ENCODE measurements at regions of chr1 and their contacts with region 1.

Region 1: DNA sequence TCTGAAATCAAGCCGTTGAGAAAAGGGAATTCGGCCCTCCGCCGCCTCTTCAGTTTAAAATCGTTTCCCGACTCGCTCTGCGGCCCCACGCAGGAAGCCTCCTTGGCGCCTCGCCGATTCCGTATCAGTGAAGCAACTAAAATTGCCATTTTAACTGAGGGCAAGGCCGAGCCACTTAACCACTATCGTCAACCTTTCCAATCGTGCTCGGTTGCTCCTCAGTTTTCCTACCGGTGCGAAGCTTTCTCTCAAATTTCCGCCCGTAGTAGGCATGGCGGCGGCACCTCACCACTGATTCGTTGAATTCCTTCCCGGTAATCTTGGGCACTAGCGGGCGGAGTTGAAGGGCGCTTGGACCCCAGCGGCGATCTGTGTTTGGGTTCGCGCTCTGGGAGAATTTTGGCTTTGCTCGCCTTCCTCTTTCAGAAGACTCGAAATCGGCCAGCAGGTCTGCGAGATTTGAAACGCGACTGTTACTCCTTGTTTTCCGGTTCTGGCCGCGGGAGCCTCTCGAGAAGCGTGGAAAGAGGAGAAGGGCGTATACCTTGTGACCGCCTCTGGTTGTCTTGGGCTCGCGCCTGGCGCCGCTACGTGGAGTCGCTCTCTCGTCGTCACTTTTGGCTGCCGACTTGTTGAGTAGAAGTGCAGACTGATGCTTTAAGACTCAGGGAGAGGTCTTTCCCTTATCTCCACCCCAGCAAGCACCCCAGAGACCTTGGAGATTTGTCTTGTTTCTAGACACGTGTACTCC is at the starts of genes CENPL and DARS2:
- DNase-seq: peak; percentile 95
- H3K4me3 Mint-ChIP-seq: peak within 1 kb of the TSS; percentile 98
- H3K27ac Mint-ChIP-seq: peak within 1 kb of the TSS; percentile 99
- H3K4me1 Mint-ChIP-seq: peaks cover 45% of the 10 kb centered on the region
- H3K27me3 Mint-ChIP-seq: no peaks in the 10 kb centered on the region
- total RNA-seq, gene CENPL: 24.5 to 26.3 TPM
- total RNA-seq, gene DARS2: 43.1 to 43.6 TPM

Region 2: GRCh38 chr1:173420330-173420806 is 404.1 kb before region 1 on chr1:
- CTCF ChIA-PET with region 1: interaction called, 8 read pairs
- POLR2A ChIA-PET with region 1: no interaction called
- intact Hi-C with region 1: loop called (anchors 1 kb)
- DNase-seq: peak; percentile 72
- H3K4me3 Mint-ChIP-seq: no peak overlapping the region
- H3K27ac Mint-ChIP-seq: no peak overlapping the region
- H3K4me1 Mint-ChIP-seq: peaks cover 8% of the 10 kb centered on the region
- H3K27me3 Mint-ChIP-seq: no peaks in the 10 kb centered on the region

Region 3: DNA sequence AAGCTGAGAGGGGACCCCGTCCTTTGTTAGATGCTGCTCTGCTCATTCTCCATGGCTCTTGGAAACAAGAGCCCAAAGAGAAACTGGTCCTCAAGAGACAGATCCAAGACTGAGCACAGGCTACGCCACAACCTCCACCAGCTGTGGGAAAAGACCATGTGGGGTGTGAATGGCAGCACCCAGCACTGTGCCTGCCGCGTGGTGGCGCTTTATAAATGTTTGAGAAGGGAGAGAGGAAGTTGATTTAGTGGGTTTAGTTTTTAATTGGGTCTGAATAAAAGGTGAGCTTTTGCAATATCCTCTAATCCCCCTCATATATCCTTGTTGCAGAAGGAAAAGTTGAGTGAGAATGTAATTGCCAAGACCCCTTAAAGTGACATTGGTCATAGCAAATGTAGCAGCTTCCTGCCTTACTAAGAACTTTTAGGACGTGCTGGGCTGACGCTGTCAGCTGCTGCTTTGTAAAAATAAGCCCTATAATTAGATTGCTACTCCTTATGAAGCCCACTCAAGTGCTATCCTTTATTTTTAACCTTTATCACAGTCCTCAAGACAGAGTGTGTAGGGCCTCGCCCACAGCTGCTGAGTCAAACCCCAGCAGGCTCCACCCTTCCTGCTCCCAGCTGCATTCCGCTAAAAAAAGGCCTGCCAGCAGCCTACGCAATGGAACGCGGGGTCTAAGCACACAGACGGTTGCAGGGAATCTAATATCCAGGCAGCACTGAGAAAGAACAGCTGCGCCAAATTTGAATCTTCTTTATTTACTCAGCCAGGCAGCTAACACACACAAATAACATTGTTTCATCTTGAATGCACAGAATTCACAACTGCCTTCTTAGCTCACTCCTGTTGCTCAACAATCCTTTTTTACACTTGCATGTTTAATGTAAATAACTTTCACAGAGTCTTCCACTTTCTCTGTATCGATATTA is 394.8 kb before region 1 on chr1:
- CTCF ChIA-PET with region 1: interaction called, 75 read pairs
- POLR2A ChIA-PET with region 1: no interaction called
- intact Hi-C with region 1: loop called (anchors 1 kb)
- DNase-seq: peak; percentile 79
- H3K4me3 Mint-ChIP-seq: peak overlapping the region; percentile 20
- H3K27ac Mint-ChIP-seq: peak overlapping the region; percentile 55
- H3K4me1 Mint-ChIP-seq: peaks cover 19% of the 10 kb centered on the region
- H3K27me3 Mint-ChIP-seq: no peaks in the 10 kb centered on the region

Region 4: GRCh38 chr1:173476664-173477285 is 347.7 kb before region 1 on chr1:
- CTCF ChIA-PET with region 1: interaction called, 3 read pairs
- POLR2A ChIA-PET with region 1: interaction called, 4 read pairs
- intact Hi-C with region 1: loop called (anchors 1 kb)
- DNase-seq: peak; percentile 90
- H3K4me3 Mint-ChIP-seq: peak overlapping the region; percentile 84
- H3K27ac Mint-ChIP-seq: peak overlapping the region; percentile 90
- H3K4me1 Mint-ChIP-seq: peaks cover 53% of the 10 kb centered on the region
- H3K27me3 Mint-ChIP-seq: no peaks in the 10 kb centered on the region

Region 5: GRCh38 chr1:173714759-173715537 is 109.6 kb before region 1 on chr1 and contains the start of gene KLHL20:
- CTCF ChIA-PET with region 1: interaction called, 7 read pairs
- POLR2A ChIA-PET with region 1: interaction called, 19 read pairs
- intact Hi-C with region 1: loop called (anchors 1 kb)
- DNase-seq: peak; percentile 92
- H3K4me3 Mint-ChIP-seq: peak within 1 kb of the TSS; percentile 96
- H3K27ac Mint-ChIP-seq: peak within 1 kb of the TSS; percentile 92
- H3K4me1 Mint-ChIP-seq: peaks cover 31% of the 10 kb centered on the region
- H3K27me3 Mint-ChIP-seq: peaks cover 14% of the 10 kb centered on the region
- total RNA-seq, gene KLHL20: 12.9 to 14.9 TPM

Region 6: DNA sequence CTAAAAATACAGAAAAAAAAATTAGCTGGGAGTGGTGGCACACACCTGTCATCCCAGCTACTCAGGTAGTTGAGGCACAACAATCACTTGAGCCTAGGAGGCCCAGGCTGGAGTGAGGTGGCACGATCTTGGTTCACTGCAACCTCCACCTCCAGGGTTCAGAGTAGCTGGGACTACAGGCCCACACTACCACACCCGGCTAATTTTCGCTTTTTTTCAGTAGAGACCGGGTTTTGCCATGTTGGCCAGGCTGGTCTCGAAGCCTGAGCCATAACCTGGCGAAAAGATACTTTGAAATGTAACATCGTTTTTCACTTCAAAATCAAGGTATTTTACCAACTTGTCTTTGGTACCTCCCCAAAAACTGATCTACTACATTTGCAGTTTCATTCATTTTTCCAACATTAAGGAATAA is 37.2 kb after region 1 on chr1:
- CTCF ChIA-PET with region 1: interaction called, 3 read pairs
- POLR2A ChIA-PET with region 1: interaction called, 25 read pairs
- intact Hi-C with region 1: no loop called
- DNase-seq: no peak
- H3K4me3 Mint-ChIP-seq: no peak overlapping the region
- H3K27ac Mint-ChIP-seq: peak overlapping the region; percentile 98
- H3K4me1 Mint-ChIP-seq: peaks cover 34% of the 10 kb centered on the region
- H3K27me3 Mint-ChIP-seq: no peaks in the 10 kb centered on the region

Region 7: DNA sequence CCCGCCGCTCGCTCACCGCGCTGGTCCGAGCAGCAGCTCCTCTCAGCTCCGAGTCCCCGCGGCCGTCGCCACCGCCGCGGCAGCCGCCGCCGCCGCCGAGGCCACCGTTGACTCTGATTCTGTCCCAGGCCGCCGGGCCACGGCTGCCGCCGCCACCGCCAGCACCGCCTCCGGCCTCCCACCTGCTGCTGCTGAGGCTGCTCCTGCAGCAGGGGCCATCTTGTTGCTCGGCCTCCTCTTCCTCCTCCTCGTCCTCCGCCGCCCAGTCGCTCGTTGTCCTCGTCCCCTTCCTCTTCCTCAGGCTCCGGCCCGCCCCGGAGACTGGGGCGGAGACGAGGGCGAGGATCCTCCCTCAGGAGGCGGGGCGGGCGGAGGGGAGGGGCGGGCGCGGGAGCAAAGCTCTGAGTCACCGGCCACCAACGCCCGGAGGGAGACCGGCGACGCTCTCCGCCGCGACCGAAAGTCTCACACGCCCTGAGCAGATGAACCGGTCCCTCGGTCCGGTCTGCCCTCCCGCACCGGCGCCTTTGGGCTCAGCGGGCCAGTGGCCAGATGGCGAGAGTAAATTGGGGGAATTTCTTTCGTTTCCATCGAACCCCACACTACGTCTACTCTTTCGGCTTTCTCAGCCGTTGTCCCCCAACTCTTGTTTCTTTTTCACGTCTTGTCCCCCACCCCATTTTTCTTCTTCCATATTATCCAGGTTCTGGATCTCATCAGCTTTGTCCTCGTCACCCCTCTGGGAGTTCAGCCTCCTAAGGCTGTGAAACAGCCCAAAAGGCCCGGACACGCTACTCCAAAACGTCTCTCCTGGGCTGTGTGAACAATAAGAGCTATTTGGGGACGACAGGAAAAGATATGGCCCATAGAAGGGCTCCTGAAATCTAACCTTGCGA is 197.8 kb after region 1 on chr1 and contains the start of gene RC3H1:
- CTCF ChIA-PET with region 1: no interaction called
- POLR2A ChIA-PET with region 1: no interaction called
- intact Hi-C with region 1: loop called (anchors 5 kb)
- DNase-seq: peak; percentile 94
- H3K4me3 Mint-ChIP-seq: peak within 1 kb of the TSS; percentile 97
- H3K27ac Mint-ChIP-seq: peak within 1 kb of the TSS; percentile 93
- H3K4me1 Mint-ChIP-seq: peaks cover 38% of the 10 kb centered on the region
- H3K27me3 Mint-ChIP-seq: no peaks in the 10 kb centered on the region
- total RNA-seq, gene RC3H1: 26.6 to 26.8 TPM